ENCODE measurements at regions of chr12 and their contacts with region 1.

Region 1: GRCh38 chr12:124906606-124907261 is 7.7 kb downstream of the UBC start:
- DNase-seq: peak; percentile 88 to 95
- H3K4me3 ChIP-seq: no peak overlapping the region
- H3K27ac ChIP-seq: peak overlapping the region; percentile 33 to 42
- H3K4me1 ChIP-seq: peaks cover 0 to 46% (median 28%) of the 10 kb centered on the region in 4 donors
- H3K27me3 ChIP-seq: no peaks in the 10 kb centered on the region
- CTCF ChIP-seq: peak; percentile 94 to 95

Region 2: GRCh38 chr12:124774462-124775167 is 132.1 kb before region 1 on chr12:
- intact Hi-C with region 1: loop called (anchors 5 kb)
- DNase-seq: no peak
- H3K4me3 ChIP-seq: peak overlapping the region; percentile 21 to 35
- H3K27ac ChIP-seq: peak overlapping the region; percentile 27 to 30
- H3K4me1 ChIP-seq: peaks cover 0 to 27% (median 18%) of the 10 kb centered on the region in 4 donors
- H3K27me3 ChIP-seq: peaks cover 0 to 4% of the 10 kb centered on the region in 2 donors
- CTCF ChIP-seq: no peak

Region 3: GRCh38 chr12:124786061-124786964 is 120.4 kb before region 1 on chr12:
- intact Hi-C with region 1: no loop called
- DNase-seq: peak; percentile 66 to 89
- H3K4me3 ChIP-seq: peak overlapping the region; percentile 39 to 42
- H3K27ac ChIP-seq: no peak overlapping the region
- H3K4me1 ChIP-seq: peaks cover 0 to 12% (median 4%) of the 10 kb centered on the region in 4 donors
- H3K27me3 ChIP-seq: no peaks in the 10 kb centered on the region
- CTCF ChIP-seq: no peak

Region 4: GRCh38 chr12:124940549-124941527 is 34.1 kb after region 1 on chr12:
- intact Hi-C with region 1: loop called (anchors 5 kb)
- DNase-seq: peak; percentile 92 to 94
- H3K4me3 ChIP-seq: peak overlapping the region; percentile 50 to 56
- H3K27ac ChIP-seq: peak overlapping the region; percentile 87 to 88
- H3K4me1 ChIP-seq: peaks cover 0 to 25% (median 16%) of the 10 kb centered on the region in 4 donors
- H3K27me3 ChIP-seq: no peaks in the 10 kb centered on the region
- CTCF ChIP-seq: peak; percentile 85 to 86

Measured in tibial artery (tissue), 4 donors.